ENCODE measurements at regions of chr1 and their contacts with region 1.

Region 1: GRCh38 chr1:152459596-152460528 is 45.8 kb upstream of the CRNN start:
- DNase-seq: peak; percentile 85
- H3K4me3 Mint-ChIP-seq: no peak overlapping the region
- H3K27ac Mint-ChIP-seq: no peak overlapping the region
- H3K4me1 Mint-ChIP-seq: peaks cover 17% of the 10 kb centered on the region
- H3K27me3 Mint-ChIP-seq: no peaks in the 10 kb centered on the region
- CTCF ChIP-seq: peak; percentile 87

Region 2: GRCh38 chr1:152148981-152149380 is 310.9 kb before region 1 on chr1:
- CTCF ChIA-PET with region 1: interaction called, 10 read pairs
- POLR2A ChIA-PET with region 1: interaction called, 3 read pairs
- intact Hi-C with region 1: no loop called
- DNase-seq: no peak
- H3K4me3 Mint-ChIP-seq: no peak overlapping the region
- H3K27ac Mint-ChIP-seq: no peak overlapping the region
- H3K4me1 Mint-ChIP-seq: no peaks in the 10 kb centered on the region
- H3K27me3 Mint-ChIP-seq: no peaks in the 10 kb centered on the region
- CTCF ChIP-seq: no peak

Region 3: GRCh38 chr1:152189657-152190442 is 270.0 kb before region 1 on chr1:
- CTCF ChIA-PET with region 1: interaction called, 187 read pairs
- POLR2A ChIA-PET with region 1: interaction called, 10 read pairs
- intact Hi-C with region 1: loop called (anchors 1 kb)
- DNase-seq: peak; percentile 90
- H3K4me3 Mint-ChIP-seq: peak overlapping the region; percentile 60
- H3K27ac Mint-ChIP-seq: peak overlapping the region; percentile 1
- H3K4me1 Mint-ChIP-seq: peaks cover 41% of the 10 kb centered on the region
- H3K27me3 Mint-ChIP-seq: peaks cover 11% of the 10 kb centered on the region
- CTCF ChIP-seq: peak; percentile 91

Region 4: GRCh38 chr1:152347116-152347728 is 112.6 kb before region 1 on chr1:
- CTCF ChIA-PET with region 1: interaction called, 39 read pairs
- POLR2A ChIA-PET with region 1: interaction called, 6 read pairs
- intact Hi-C with region 1: loop called (anchors 1 kb)
- DNase-seq: peak; percentile 90
- H3K4me3 Mint-ChIP-seq: no peak overlapping the region
- H3K27ac Mint-ChIP-seq: no peak overlapping the region
- H3K4me1 Mint-ChIP-seq: no peaks in the 10 kb centered on the region
- H3K27me3 Mint-ChIP-seq: peaks cover 43% of the 10 kb centered on the region
- CTCF ChIP-seq: peak; percentile 98

Region 5: DNA sequence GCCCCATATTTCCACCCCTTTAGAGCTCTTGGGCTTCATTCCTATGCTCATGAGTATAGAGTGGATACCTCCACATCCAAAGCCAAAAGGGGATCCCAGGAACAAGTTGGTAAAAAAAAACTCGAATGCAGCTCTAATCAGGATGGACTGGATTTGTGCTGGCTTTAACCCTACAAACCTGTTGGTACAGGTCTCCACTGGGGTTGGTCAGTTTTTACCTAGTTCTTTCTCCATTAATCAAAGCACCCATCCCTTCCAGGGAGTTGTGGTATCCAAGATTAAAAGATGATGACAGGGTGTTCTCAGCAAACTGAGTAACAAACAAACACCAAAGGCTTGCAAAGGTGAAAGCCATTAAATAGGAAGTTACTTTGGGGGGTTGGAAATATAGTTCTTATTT is 39.9 kb before region 1 on chr1:
- CTCF ChIA-PET with region 1: interaction called, 17 read pairs
- POLR2A ChIA-PET with region 1: no interaction called
- intact Hi-C with region 1: no loop called
- DNase-seq: no peak
- H3K4me3 Mint-ChIP-seq: no peak overlapping the region
- H3K27ac Mint-ChIP-seq: no peak overlapping the region
- H3K4me1 Mint-ChIP-seq: no peaks in the 10 kb centered on the region
- H3K27me3 Mint-ChIP-seq: peaks cover 57% of the 10 kb centered on the region
- CTCF ChIP-seq: no peak

Region 6: GRCh38 chr1:152486400-152487006 is 26.6 kb after region 1 on chr1:
- CTCF ChIA-PET with region 1: interaction called, 26 read pairs
- POLR2A ChIA-PET with region 1: interaction called, 3 read pairs
- intact Hi-C with region 1: no loop called
- DNase-seq: peak; percentile 51
- H3K4me3 Mint-ChIP-seq: no peak overlapping the region
- H3K27ac Mint-ChIP-seq: peak overlapping the region; percentile 85
- H3K4me1 Mint-ChIP-seq: peaks cover 20% of the 10 kb centered on the region
- H3K27me3 Mint-ChIP-seq: no peaks in the 10 kb centered on the region
- CTCF ChIP-seq: peak; percentile 75

Region 7: DNA sequence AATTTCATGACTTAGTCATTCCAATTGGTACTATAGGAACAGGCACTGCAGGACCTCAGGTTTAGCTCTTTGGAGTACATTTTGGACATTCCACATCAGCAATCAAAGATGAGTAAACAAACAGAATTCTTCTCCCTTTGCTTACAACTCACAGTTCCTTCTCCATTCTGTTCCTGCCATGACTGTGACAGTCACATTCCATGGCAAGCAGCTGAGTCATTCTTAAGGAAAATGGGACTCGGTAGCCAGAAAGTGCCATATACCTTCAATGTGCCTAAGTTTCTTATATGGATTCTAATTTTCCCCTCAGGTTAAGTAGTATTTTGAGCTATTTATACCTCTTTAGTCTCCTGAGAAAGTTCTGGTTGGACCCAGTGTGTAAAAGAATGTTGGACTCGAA is 80.0 kb after region 1 on chr1:
- CTCF ChIA-PET with region 1: interaction called, 47 read pairs
- POLR2A ChIA-PET with region 1: interaction called, 4 read pairs
- intact Hi-C with region 1: no loop called
- DNase-seq: no peak
- H3K4me3 Mint-ChIP-seq: no peak overlapping the region
- H3K27ac Mint-ChIP-seq: no peak overlapping the region
- H3K4me1 Mint-ChIP-seq: no peaks in the 10 kb centered on the region
- H3K27me3 Mint-ChIP-seq: peaks cover 11% of the 10 kb centered on the region
- CTCF ChIP-seq: no peak

Region 8: GRCh38 chr1:153572569-153573015 is 1112.7 kb after region 1 on chr1:
- CTCF ChIA-PET with region 1: no interaction called
- POLR2A ChIA-PET with region 1: no interaction called
- intact Hi-C with region 1: no loop called
- DNase-seq: peak; percentile 94
- H3K4me3 Mint-ChIP-seq: no peak overlapping the region
- H3K27ac Mint-ChIP-seq: peak overlapping the region; percentile 67
- H3K4me1 Mint-ChIP-seq: peaks cover 33% of the 10 kb centered on the region
- H3K27me3 Mint-ChIP-seq: no peaks in the 10 kb centered on the region
- CTCF ChIP-seq: peak; percentile 98

Measured in MCF 10A (cell line).